Prostate gland (tissue), 2 donors: ENCODE measurements at regions of chr1 and their contacts with region 1.

Region 1: DNA sequence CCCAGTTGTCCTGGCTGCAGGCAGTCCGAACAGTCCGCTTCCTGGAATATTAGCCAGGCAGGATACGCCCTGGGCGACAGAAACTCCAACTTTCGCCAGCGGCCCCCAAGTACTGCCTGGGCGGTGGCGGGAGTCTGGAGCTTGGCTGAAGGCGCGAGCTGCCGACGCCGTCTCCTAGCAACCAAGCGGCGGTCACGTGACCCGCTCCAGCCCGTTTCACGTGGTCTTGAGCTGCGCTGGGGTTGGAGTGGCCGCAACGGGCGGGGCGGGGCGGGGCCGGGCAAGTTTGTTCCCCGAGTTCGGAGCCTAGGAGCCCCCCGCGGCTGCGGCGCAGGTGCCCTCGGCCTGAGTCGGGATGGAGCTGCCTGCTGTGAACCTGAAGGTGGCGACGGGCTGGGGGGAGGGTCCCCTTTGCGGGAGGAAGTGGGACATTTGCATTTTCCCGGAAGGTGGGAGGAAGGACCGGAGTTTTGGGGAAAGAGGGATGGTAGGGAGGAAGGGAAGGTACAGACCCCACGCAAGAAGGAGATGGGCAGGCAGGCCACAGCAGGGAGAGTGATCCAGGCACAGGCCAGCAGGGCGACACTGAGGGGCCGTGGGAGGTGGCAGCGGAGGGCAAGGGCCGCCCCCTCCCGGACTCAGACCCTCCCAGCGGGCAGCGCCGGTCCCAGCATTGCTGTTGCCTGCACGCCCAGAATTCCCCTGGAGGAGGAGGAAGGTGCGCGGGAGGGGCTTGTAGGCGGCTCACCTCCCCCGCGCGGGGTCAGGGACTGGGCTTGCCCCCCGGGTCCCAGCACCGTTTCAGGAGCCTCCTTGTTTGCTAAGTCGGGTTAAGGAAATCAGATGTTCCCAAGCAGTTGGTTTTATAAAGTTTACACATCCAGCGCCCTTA is at the start of gene AGTRAP:
- DNase-seq: peak; percentile 96
- H3K4me3 ChIP-seq: peak within 1 kb of the TSS; percentile 68 to 72
- H3K27ac ChIP-seq: peak within 1 kb of the TSS; percentile 94 to 95
- H3K4me1 ChIP-seq: peaks cover 26% of the 10 kb centered on the region
- H3K27me3 ChIP-seq: no peaks in the 10 kb centered on the region
- CTCF ChIP-seq: no peak
- POLR2A ChIP-seq: peak; percentile 82
- total RNA-seq, gene AGTRAP: 114 to 123 TPM

Region 2: GRCh38 chr1:11364170-11364569 is 371.9 kb before region 1 on chr1:
- intact Hi-C with region 1: no loop called
- DNase-seq: no peak
- H3K4me3 ChIP-seq: no peak overlapping the region
- H3K27ac ChIP-seq: no peak overlapping the region
- H3K4me1 ChIP-seq: no peaks in the 10 kb centered on the region
- H3K27me3 ChIP-seq: no peaks in the 10 kb centered on the region
- CTCF ChIP-seq: peak in 1 of 4 experiments; percentile 22
- POLR2A ChIP-seq: no peak

Region 3: GRCh38 chr1:11681071-11681771 is 54.9 kb before region 1 on chr1 and contains the start of gene MAD2L2:
- intact Hi-C with region 1: loop called (anchors 5 kb)
- DNase-seq: peak; percentile 81
- H3K4me3 ChIP-seq: peak within 1 kb of the TSS; percentile 62 to 76
- H3K27ac ChIP-seq: peak within 1 kb of the TSS; percentile 79 to 80
- H3K4me1 ChIP-seq: peaks cover 6% of the 10 kb centered on the region
- H3K27me3 ChIP-seq: no peaks in the 10 kb centered on the region
- CTCF ChIP-seq: peak in 3 of 4 experiments; percentile 5 to 9 (median 6)
- POLR2A ChIP-seq: peak; percentile 69
- total RNA-seq, gene MAD2L2: 37.3 to 67.8 TPM

Region 4: GRCh38 chr1:11784993-11785769 is 49.1 kb after region 1 on chr1:
- intact Hi-C with region 1: loop called (anchors 5 kb)
- DNase-seq: peak; percentile 49
- H3K4me3 ChIP-seq: no peak overlapping the region
- H3K27ac ChIP-seq: peak overlapping the region; percentile 37 to 54
- H3K4me1 ChIP-seq: peaks cover 8% of the 10 kb centered on the region
- H3K27me3 ChIP-seq: no peaks in the 10 kb centered on the region
- CTCF ChIP-seq: peak; percentile 62 to 90 (median 74)
- POLR2A ChIP-seq: peak; percentile 29

Region 5: DNA sequence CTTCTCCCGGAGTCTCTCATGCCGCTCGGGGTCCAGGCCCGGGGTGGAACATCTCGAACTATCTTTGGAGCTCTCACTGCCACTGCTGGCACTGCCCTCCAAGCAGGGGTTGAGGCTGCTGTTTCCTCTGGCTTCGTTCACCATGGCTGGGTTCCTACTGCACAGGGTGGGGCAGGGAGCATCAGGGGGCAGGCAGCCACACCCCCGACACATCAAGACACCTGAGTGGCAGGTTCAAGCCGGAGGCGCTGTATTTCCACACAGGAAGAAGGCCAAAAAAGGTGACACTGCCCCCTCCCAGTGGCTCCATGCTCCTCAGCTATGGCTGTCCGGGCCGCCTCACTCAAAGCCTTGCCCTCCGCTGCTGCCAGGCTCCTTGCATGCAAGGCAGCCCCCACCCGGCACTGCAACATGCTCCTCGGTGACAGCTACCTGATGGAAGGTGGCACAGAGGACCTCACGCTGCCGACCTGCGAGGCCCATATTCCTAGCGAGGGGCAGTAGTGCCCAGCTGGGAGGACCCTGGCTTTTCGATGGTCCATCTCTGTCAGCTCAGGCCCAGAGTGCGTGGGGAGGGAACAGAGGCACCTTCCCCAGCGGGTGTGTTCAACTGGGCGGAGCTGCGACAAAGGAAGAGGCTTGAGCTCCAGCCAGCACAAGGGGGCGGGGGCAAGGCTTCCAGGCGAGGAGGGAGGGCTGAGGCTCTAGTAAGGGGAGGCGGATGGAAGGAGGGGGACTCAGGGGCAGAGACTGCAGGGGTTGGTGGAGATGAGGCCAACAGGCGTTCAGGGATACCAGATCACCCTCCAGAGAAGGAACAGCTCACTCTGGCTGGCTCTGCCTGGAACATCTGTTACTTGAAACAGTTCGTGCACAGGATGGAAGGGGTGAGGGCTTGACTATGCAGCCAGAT is 67.1 kb after region 1 on chr1:
- intact Hi-C with region 1: loop called (anchors 5 kb)
- DNase-seq: peak; percentile 86
- H3K4me3 ChIP-seq: peak overlapping the region; percentile 28 to 38
- H3K27ac ChIP-seq: peak overlapping the region; percentile 90 to 97
- H3K4me1 ChIP-seq: peaks cover 22% of the 10 kb centered on the region
- H3K27me3 ChIP-seq: no peaks in the 10 kb centered on the region
- CTCF ChIP-seq: peak in 1 of 4 experiments; percentile 5
- POLR2A ChIP-seq: peak; percentile 91